MCF 10A (cell line): ENCODE measurements at regions of chr21 and their contacts with region 1.

Region 1: GRCh38 chr21:44801468-44802395 is at the start of gene UBE2G2:
- DNase-seq: peak; percentile 74
- H3K4me3 Mint-ChIP-seq: peak within 1 kb of the TSS; percentile 89
- H3K27ac Mint-ChIP-seq: peak within 1 kb of the TSS; percentile 80
- H3K4me1 Mint-ChIP-seq: peaks cover 28% of the 10 kb centered on the region
- H3K27me3 Mint-ChIP-seq: no peaks in the 10 kb centered on the region
- CTCF ChIP-seq: no peak
- total RNA-seq, gene UBE2G2: 122 and 147 TPM in 2 replicates

Region 2: DNA sequence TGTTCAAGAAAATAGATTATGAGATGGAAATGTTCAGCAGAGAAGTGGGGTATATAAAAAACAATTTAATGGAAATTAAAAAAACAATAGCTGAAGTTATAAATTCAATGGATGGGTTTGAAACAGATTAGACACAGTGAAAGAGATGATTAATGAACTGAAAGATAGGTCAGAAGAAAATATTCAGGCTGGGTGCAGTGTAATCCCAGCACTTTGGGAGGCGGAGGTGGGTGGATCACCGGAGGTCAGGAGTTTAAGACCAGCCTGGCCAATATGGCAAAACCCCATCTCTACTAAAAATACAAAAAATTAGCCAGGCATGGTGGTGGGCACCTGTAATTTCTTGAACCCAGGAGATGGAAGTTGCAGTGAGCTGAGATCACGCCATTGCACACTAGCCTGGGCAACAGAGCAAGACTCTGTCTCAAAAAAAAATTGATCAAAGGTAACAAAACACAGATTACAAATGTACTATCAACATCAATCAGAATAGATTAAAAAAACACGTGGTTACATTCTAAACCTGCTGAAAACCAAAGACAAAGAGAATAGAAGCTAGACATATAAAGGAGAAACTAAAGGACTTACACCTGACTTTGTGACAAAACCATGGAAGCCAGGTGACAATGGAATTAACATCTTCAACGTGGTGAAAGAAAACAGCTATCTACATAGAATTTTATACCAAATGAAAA is 20.9 kb after region 1 on chr21:
- CTCF ChIA-PET with region 1: interaction called, 10 read pairs
- POLR2A ChIA-PET with region 1: interaction called, 11 read pairs
- intact Hi-C with region 1: no loop called
- DNase-seq: no peak
- H3K4me3 Mint-ChIP-seq: no peak overlapping the region
- H3K27ac Mint-ChIP-seq: no peak overlapping the region
- H3K4me1 Mint-ChIP-seq: no peaks in the 10 kb centered on the region
- H3K27me3 Mint-ChIP-seq: peaks cover 6% of the 10 kb centered on the region
- CTCF ChIP-seq: no peak

Region 3: DNA sequence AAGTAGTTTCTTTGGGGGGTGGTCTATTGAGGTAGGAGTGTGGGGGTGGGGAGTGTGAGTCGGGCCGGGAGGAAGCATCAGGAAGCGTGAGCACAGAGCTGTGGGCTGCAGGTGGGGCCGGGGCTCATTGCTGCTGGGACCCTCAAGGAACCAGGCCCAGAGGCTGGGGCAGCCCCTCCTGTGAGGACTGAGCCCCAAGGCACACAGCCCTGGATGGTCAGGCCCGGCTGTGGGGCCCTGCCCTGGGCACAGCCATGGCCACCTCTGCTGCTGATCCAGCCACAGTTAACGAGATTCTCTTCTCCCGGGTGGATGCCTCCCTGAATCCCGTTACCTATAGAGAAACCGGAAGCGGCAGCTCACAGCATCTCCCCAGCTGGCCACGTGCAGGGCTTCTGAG is 39.0 kb after region 1 on chr21:
- CTCF ChIA-PET with region 1: no interaction called
- POLR2A ChIA-PET with region 1: no interaction called
- intact Hi-C with region 1: no loop called
- DNase-seq: no peak
- H3K4me3 Mint-ChIP-seq: no peak overlapping the region
- H3K27ac Mint-ChIP-seq: no peak overlapping the region
- H3K4me1 Mint-ChIP-seq: peaks cover 5% of the 10 kb centered on the region
- H3K27me3 Mint-ChIP-seq: no peaks in the 10 kb centered on the region
- CTCF ChIP-seq: no peak

Region 4: GRCh38 chr21:44873356-44874239 is 71.9 kb after region 1 on chr21 and contains the start of gene PTTG1IP:
- CTCF ChIA-PET with region 1: interaction called, 36 read pairs
- POLR2A ChIA-PET with region 1: interaction called, 161 read pairs
- intact Hi-C with region 1: loop called (anchors 1 kb)
- DNase-seq: peak; percentile 98
- H3K4me3 Mint-ChIP-seq: peak within 1 kb of the TSS; percentile 80
- H3K27ac Mint-ChIP-seq: peak within 1 kb of the TSS; percentile 91
- H3K4me1 Mint-ChIP-seq: peaks cover 40% of the 10 kb centered on the region
- H3K27me3 Mint-ChIP-seq: no peaks in the 10 kb centered on the region
- CTCF ChIP-seq: no peak
- total RNA-seq, gene PTTG1IP: 326 and 338 TPM in 2 replicates

Region 5: DNA sequence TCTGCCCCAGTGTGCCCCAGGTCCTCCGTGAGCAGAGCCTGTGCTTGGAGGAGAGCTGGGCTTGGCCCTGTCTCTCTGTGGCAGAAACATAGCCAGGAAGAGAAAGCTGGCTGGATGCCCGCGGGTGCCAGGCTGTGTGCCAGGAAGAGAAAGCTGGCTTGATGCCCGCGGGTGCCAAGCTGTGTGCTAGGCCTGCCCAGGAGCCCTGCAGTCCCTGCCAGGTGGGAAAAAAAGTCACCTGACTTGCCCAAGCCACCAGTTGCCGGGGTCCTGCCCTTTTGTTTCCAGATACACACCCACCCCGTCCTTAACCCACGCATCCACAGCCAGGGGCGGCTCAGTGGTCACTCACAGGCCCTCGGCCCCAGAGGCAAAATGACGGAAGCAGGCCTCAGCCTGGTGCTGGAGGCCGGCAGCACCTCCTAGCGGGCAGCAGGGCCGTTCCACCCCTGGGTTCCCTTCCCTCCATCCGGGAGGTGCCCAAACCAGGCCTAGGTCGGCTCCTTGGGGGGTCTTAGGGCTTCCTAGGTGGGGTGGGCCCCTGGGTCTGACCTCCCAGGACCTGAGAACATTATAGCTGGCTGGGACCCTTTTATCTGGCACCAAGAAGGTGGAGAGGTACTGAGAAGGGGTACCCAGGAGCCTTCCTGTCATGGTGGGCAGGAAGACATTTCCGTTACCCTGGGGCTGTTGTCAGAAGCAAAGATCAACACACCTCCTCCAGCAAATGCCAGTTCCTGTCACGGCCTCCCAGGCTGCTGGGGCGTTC is 109.8 kb after region 1 on chr21:
- CTCF ChIA-PET with region 1: interaction called, 48 read pairs
- POLR2A ChIA-PET with region 1: interaction called, 12 read pairs
- intact Hi-C with region 1: loop called (anchors 1 kb)
- DNase-seq: peak; percentile 93
- H3K4me3 Mint-ChIP-seq: peak overlapping the region; percentile 42
- H3K27ac Mint-ChIP-seq: peak overlapping the region; percentile 1
- H3K4me1 Mint-ChIP-seq: peaks cover 37% of the 10 kb centered on the region
- H3K27me3 Mint-ChIP-seq: no peaks in the 10 kb centered on the region
- CTCF ChIP-seq: peak; percentile 87

Region 6: GRCh38 chr21:44927587-44928461 is 126.1 kb after region 1 on chr21:
- CTCF ChIA-PET with region 1: interaction called, 32 read pairs
- POLR2A ChIA-PET with region 1: interaction called, 4 read pairs
- intact Hi-C with region 1: loop called (anchors 1 kb)
- DNase-seq: peak; percentile 94
- H3K4me3 Mint-ChIP-seq: peak overlapping the region; percentile 60
- H3K27ac Mint-ChIP-seq: peak overlapping the region; percentile 80
- H3K4me1 Mint-ChIP-seq: peaks cover 64% of the 10 kb centered on the region
- H3K27me3 Mint-ChIP-seq: no peaks in the 10 kb centered on the region
- CTCF ChIP-seq: no peak

Region 7: DNA sequence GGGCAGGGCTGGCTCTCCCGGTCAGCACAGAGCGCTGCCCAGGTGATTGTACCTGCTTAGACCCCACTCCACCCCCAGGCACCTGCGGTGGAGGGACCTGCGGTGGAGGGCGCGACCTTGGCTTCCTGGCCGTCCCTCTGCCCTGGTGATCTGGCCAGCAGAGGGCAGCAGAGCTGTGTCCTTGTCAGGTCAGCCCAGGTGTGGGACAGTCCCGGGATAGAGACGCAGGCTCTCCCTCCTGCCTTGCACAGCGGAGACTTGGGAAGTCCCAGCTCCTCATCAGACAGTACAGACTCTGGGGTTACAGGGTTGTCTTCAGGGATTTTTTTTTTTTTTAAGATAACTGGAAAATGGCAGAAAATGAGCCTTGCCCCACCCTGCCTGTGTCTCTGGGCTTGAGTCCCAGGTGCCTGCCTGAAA is 148.1 kb after region 1 on chr21:
- CTCF ChIA-PET with region 1: interaction called, 23 read pairs
- POLR2A ChIA-PET with region 1: no interaction called
- intact Hi-C with region 1: no loop called
- DNase-seq: peak; percentile 83
- H3K4me3 Mint-ChIP-seq: no peak overlapping the region
- H3K27ac Mint-ChIP-seq: no peak overlapping the region
- H3K4me1 Mint-ChIP-seq: peaks cover 11% of the 10 kb centered on the region
- H3K27me3 Mint-ChIP-seq: no peaks in the 10 kb centered on the region
- CTCF ChIP-seq: peak; percentile 90

Region 8: GRCh38 chr21:45140346-45140940 is 338.7 kb after region 1 on chr21:
- CTCF ChIA-PET with region 1: interaction called, 29 read pairs
- POLR2A ChIA-PET with region 1: no interaction called
- intact Hi-C with region 1: no loop called
- DNase-seq: peak; percentile 86
- H3K4me3 Mint-ChIP-seq: no peak overlapping the region
- H3K27ac Mint-ChIP-seq: no peak overlapping the region
- H3K4me1 Mint-ChIP-seq: peaks cover 13% of the 10 kb centered on the region
- H3K27me3 Mint-ChIP-seq: no peaks in the 10 kb centered on the region
- CTCF ChIP-seq: peak; percentile 95